Activated CD4-positive, alpha-beta memory T cell treated with anti-CD3 and anti-CD28 coated beads for 36 hours (primary cell): ENCODE measurements at regions of chr12 and their contacts with region 1.

Region 1: GRCh38 chr12:105226219-105226618 is 9.8 kb downstream of the APPL2 start:
- DNase-seq: peak; percentile 38
- H3K4me3 Mint-ChIP-seq: no peak overlapping the region
- H3K27ac Mint-ChIP-seq: no peak overlapping the region
- H3K4me1 Mint-ChIP-seq: peaks cover 56% of the 10 kb centered on the region
- H3K27me3 Mint-ChIP-seq: no peaks in the 10 kb centered on the region

Region 2: DNA sequence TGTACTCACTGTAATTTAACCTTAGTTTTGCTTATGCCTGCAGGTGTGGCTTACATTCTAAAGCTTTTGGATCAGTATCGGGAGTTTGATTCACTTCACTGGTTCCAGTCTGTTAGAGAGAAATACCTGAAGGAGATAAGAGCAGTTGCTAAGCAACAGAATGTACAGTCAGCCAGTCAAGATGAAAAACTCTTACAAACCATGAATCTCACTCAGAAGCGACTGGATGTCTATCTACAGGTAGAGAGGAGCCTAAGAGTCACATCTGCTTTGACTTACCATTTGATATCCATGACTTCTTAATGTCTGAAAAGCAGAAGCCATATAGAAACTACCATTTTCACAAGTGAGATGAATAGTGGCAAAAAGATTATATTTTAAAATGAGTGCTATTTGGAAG is 62.2 kb before region 1 on chr12:
- CTCF ChIA-PET with region 1: no interaction called
- POLR2A ChIA-PET with region 1: no interaction called
- intact Hi-C with region 1: loop called (anchors 5 kb)
- DNase-seq: no peak
- H3K4me3 Mint-ChIP-seq: no peak overlapping the region
- H3K27ac Mint-ChIP-seq: peak overlapping the region; percentile 24
- H3K4me1 Mint-ChIP-seq: peaks cover 5% of the 10 kb centered on the region
- H3K27me3 Mint-ChIP-seq: no peaks in the 10 kb centered on the region

Region 3: GRCh38 chr12:105204916-105205315 is 21.3 kb before region 1 on chr12:
- CTCF ChIA-PET with region 1: no interaction called
- POLR2A ChIA-PET with region 1: no interaction called
- intact Hi-C with region 1: loop called (anchors 2 kb)
- DNase-seq: peak; percentile 73
- H3K4me3 Mint-ChIP-seq: no peak overlapping the region
- H3K27ac Mint-ChIP-seq: peak overlapping the region; percentile 81
- H3K4me1 Mint-ChIP-seq: peaks cover 21% of the 10 kb centered on the region
- H3K27me3 Mint-ChIP-seq: no peaks in the 10 kb centered on the region

Region 4: GRCh38 chr12:105279460-105280056 is 53.3 kb after region 1 on chr12:
- CTCF ChIA-PET with region 1: no interaction called
- POLR2A ChIA-PET with region 1: no interaction called
- intact Hi-C with region 1: loop called (anchors 5 kb)
- DNase-seq: peak; percentile 55
- H3K4me3 Mint-ChIP-seq: no peak overlapping the region
- H3K27ac Mint-ChIP-seq: no peak overlapping the region
- H3K4me1 Mint-ChIP-seq: no peaks in the 10 kb centered on the region
- H3K27me3 Mint-ChIP-seq: peaks cover 6% of the 10 kb centered on the region